Vagina (tissue), 2 donors: ENCODE measurements at regions of chr15 and their contacts with region 1.

Region 1: DNA sequence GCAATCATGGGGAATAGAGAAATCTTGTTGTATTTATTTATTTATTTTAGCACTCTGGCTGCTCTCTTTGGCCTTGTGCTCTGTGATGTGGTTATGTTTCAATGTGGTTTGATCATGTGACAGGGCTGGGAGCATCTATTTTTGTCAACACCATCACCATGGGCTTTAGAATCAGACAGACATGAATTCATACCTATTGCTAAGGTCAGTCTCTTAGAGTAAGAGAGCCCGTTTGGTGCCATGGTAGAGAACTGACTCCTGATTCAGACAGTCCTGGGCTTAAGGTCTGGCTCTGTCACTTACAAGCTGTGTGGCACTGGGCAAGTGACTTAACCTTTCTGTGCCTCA is 157.0 kb downstream of the RYR3 start:
- DNase-seq: peak in 1 of 2 donors; percentile 29
- H3K4me3 ChIP-seq: no peak overlapping the region
- H3K27ac ChIP-seq: no peak overlapping the region
- H3K4me1 ChIP-seq: no peaks in the 10 kb centered on the region
- H3K27me3 ChIP-seq: no peaks in the 10 kb centered on the region
- CTCF ChIP-seq: no peak
- POLR2A ChIP-seq: no peak

Region 2: DNA sequence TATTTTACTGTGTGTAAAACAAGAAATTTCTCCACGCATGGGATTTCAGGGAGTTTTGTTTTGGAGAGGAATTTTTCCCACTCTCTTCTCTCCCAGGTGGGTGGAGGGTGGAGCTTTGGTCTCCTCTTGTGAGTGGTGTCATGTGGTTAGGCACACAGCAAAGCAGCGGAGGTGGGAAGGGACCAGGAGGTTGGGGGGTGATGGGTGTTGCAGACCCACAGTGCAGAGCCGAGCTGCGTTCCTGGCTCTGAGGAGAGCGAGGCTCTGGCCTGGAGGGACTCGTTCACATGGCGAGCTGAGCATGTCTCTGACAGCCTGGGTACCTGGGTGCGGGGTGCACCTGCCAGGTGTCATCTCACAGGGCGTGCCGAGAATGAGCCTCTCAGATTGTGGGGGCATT is 69.2 kb before region 1 on chr15:
- intact Hi-C with region 1: loop called (anchors 2 kb)
- DNase-seq: no peak
- H3K4me3 ChIP-seq: no peak overlapping the region
- H3K27ac ChIP-seq: no peak overlapping the region
- H3K4me1 ChIP-seq: no peaks in the 10 kb centered on the region
- H3K27me3 ChIP-seq: no peaks in the 10 kb centered on the region
- CTCF ChIP-seq: no peak
- POLR2A ChIP-seq: no peak